Breast epithelium (tissue), 4 donors: ENCODE measurements at regions of chr12 and their contacts with region 1.

Region 1: DNA sequence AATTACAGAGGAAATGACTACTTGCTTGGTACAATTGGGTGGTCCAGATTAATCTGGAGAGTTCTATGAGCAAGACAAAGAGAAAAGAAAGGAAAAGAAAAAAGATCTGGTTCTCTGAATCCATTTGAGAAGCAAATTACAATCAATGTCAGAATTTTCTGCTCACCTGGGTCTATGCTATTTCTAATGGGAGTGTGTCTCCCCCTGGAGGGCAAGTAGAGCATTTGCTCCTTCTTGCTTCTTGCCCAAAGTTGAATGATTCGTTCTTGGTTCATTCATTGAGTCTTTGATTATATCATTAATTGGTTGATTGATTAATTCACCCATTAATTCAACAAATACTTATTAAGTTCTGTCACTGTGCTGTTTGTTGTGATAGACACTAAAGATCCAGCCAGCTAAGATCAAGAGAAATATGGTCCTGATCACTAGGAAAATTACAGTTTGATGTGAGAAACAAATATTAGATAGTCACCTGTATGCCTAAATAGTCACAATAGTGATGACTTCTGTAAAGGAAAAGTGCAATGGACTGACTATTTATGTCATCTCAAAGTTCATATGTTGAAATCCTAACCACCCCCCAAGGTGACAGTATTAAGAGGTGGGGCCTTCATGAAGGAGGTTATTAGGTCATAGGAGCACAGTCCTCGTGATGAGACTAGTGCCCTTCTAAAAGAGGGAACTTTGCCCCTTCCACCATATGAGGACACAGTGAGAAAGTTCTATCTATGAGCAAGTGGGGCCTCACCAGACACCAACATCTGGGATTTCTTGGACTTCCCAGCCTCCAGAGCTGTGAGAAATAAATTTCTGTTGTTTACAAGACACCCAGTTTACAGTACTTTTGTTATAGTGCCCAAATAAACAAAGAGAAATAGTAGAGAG is 8.0 kb upstream of the ASB8 start:
- DNase-seq: no peak
- H3K4me3 ChIP-seq: no peak overlapping the region
- H3K27ac ChIP-seq: no peak overlapping the region
- H3K4me1 ChIP-seq: no peaks in the 10 kb centered on the region
- H3K27me3 ChIP-seq: no peaks in the 10 kb centered on the region
- CTCF ChIP-seq: peak; percentile 78 to 83 (median 82)
- POLR2A ChIP-seq: no peak

Region 2: GRCh38 chr12:47870175-47870781 is 295.1 kb before region 1 on chr12:
- intact Hi-C with region 1: loop called (anchors 5 kb)
- DNase-seq: no peak
- H3K4me3 ChIP-seq: no peak overlapping the region
- H3K27ac ChIP-seq: peak overlapping the region in 1 of 2 donors; percentile 40
- H3K4me1 ChIP-seq: peaks cover 0 to 8% of the 10 kb centered on the region in 2 donors
- H3K27me3 ChIP-seq: no peaks in the 10 kb centered on the region
- CTCF ChIP-seq: peak in 2 of 3 donors; percentile 7 to 37
- POLR2A ChIP-seq: no peak

Region 3: DNA sequence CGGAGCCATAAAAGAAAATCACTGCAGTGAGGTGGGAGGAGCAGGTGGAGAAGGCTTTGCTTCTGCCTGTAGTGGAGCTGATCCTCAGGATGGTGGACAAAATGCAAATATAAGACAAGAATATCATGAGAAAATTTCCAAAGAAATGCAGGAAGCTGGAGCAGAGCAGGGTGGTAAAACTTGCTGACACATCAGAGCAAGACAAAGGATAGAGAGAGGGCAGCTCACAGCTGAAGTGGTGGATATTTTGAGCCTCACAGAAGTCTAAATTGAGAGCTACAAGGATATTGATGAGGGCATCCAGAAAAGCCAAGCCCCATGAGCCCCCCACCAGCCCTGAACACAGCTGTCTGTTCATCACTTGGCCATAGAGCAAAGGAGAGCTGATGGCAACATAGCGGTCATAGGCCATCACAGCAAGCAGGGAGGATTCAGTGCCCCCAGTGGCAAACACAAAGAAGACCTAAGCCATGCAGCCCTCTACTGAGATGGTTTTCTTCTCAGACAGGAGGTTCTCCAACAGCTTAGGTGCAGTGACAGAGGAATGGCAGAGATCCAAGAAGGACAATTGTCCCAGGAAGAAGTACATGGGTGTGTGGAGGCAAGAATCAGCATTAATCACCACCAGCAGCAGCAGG is 277.0 kb after region 1 on chr12:
- intact Hi-C with region 1: no loop called
- DNase-seq: no peak
- H3K4me3 ChIP-seq: no peak overlapping the region
- H3K27ac ChIP-seq: no peak overlapping the region
- H3K4me1 ChIP-seq: no peaks in the 10 kb centered on the region
- H3K27me3 ChIP-seq: no peaks in the 10 kb centered on the region
- CTCF ChIP-seq: no peak
- POLR2A ChIP-seq: no peak

Region 4: DNA sequence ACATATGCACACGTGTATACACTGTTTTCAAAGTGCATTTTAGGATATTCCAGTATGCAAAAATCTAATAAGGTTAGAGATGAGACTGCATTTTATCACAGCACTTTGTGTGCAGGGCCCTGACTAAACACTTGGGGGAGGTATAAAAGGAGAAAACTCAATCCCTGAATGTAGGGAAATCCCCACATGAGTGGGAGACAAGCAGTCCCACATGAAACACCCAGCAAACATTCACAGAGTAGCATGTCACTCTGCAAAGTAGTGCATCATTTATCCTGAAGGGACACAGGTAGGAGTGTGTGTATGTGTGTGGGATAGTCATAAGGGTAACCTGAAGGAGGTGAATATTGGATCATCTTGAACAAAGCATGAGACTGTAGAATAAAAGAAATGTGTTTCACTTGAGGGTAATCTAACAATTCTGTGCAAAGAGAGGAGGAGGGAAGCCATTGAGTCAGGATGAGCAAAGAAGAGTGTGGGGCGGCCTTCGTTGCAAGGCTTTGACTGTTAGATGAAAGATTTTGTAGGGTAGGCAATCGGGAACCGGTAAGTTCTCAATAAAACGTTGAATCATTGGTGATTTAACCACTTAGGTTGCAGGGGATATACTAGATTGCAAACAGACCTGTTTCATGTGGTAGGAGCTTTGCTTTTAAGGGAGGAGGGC is 1461.0 kb after region 1 on chr12:
- intact Hi-C with region 1: no loop called
- DNase-seq: no peak
- H3K4me3 ChIP-seq: no peak overlapping the region
- H3K27ac ChIP-seq: no peak overlapping the region
- H3K4me1 ChIP-seq: peaks cover 0 to 6% of the 10 kb centered on the region in 2 donors
- H3K27me3 ChIP-seq: no peaks in the 10 kb centered on the region
- CTCF ChIP-seq: no peak
- POLR2A ChIP-seq: no peak